AG04450 (cell line): ENCODE measurements at regions of chr12 and their contacts with region 1.

Region 1: GRCh38 chr12:68807576-68808387 is at the start of gene MDM2:
- DNase-seq: peak; percentile 61
- H3K4me3 ChIP-seq: peak within 1 kb of the TSS; percentile 97
- H3K27ac ChIP-seq: peak within 1 kb of the TSS; percentile 99
- H3K27me3 ChIP-seq: no peaks in the 10 kb centered on the region
- CTCF ChIP-seq: peak; percentile 76
- polyA plus RNA-seq, gene MDM2: 75.0 and 82.2 TPM in 2 replicates

Region 2: DNA sequence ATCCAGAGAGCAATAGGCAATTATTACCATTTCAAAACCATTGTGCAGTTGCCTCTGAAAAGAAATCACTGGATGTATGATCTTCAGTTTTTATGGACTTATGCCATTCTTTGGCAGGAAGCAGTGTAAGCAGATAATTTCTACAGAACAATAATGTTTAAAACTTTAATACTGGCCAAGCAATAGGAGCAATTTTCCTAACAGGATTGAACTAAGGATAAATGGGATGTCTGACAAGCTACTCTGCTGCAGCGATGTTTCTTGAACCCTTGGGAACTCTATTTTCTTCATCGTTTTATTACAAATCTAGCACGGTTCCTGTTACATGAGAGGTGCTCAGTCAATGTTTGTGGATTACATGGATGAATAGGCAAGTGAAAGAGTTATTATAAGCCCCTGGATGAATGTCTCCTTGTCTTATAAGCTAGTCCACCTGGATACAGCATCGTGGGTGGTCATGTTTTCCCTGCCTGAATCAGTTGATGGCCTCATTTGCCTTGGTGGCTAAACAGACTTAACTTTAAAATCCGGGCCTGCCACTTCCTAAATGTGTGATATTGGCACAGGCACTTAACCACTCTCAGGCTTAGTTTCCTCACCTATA is 407.5 kb before region 1 on chr12:
- CTCF ChIA-PET with region 1: no interaction called
- POLR2A ChIA-PET with region 1: no interaction called
- DNase-seq: no peak
- H3K4me3 ChIP-seq: no peak overlapping the region
- H3K27ac ChIP-seq: no peak overlapping the region
- H3K27me3 ChIP-seq: no peaks in the 10 kb centered on the region
- CTCF ChIP-seq: no peak

Region 3: DNA sequence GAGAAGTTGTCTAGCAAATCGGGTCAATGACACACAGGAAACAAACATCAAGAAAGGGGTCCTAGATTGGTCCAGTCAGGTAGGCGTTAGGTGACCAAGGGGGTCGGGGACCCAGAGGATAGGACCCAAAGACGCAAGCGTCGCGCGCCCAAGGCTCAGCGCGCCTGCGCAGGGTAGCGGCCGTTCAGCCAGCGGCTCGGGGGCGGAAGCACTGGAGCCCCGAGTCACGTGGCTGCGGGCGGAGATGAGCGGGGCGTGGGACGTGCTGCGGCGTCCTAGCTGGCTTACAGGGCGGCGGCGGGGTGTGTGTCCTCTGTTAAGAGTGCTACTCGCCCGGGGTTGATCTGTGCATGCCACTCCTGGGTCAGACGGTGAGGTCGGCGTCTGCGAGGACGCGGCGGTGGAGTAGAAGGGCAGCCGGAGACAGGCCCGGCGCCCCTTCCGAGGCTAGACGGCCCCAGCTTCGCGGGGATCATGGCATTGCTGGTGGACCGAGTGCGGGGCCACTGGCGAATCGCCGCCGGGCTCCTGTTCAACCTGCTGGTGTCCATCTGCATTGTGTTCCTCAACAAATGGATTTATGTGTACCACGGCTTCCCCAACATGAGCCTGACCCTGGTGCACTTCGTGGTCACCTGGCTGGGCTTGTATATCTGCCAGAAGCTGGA is 61.7 kb before region 1 on chr12 and contains the start of gene SLC35E3:
- CTCF ChIA-PET with region 1: interaction called, 6 read pairs
- POLR2A ChIA-PET with region 1: interaction called, 31 read pairs
- DNase-seq: peak; percentile 37
- H3K4me3 ChIP-seq: peak within 1 kb of the TSS; percentile 81
- H3K27ac ChIP-seq: no peak within 1 kb of the TSS
- H3K27me3 ChIP-seq: no peaks in the 10 kb centered on the region
- CTCF ChIP-seq: no peak
- polyA plus RNA-seq, gene SLC35E3: 7.7 and 9.2 TPM in 2 replicates

Region 4: GRCh38 chr12:68821357-68822188 is 13.8 kb after region 1 on chr12:
- CTCF ChIA-PET with region 1: interaction called, 5 read pairs
- POLR2A ChIA-PET with region 1: interaction called, 10 read pairs
- DNase-seq: no peak
- H3K4me3 ChIP-seq: no peak overlapping the region
- H3K27ac ChIP-seq: no peak overlapping the region
- H3K27me3 ChIP-seq: no peaks in the 10 kb centered on the region
- CTCF ChIP-seq: no peak

Region 5: GRCh38 chr12:68831272-68831671 is 23.5 kb after region 1 on chr12:
- CTCF ChIA-PET with region 1: interaction called, 110 read pairs
- POLR2A ChIA-PET with region 1: interaction called, 3 read pairs
- DNase-seq: no peak
- H3K4me3 ChIP-seq: no peak overlapping the region
- H3K27ac ChIP-seq: peak overlapping the region; percentile 11
- H3K27me3 ChIP-seq: no peaks in the 10 kb centered on the region
- CTCF ChIP-seq: no peak

Region 6: DNA sequence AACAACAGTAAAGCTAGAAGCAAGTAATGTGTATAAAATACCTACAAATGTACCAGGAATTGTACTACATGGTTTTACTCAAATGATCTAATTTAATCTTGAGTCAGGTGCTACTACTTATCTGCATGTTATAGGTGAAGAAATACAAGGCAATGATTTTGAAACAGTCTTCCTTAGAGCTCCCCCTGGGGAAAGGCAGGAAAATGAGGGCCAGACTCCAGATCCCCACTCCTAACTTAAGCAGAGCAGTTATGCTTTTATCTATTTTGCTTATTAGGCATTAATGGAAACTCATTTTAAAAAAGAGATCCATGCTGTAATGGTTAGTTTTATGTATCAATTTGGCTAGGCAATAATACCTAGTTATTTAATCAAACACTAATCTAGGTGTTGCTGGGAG is 322.3 kb after region 1 on chr12:
- CTCF ChIA-PET with region 1: no interaction called
- POLR2A ChIA-PET with region 1: no interaction called
- DNase-seq: no peak
- H3K4me3 ChIP-seq: no peak overlapping the region
- H3K27ac ChIP-seq: no peak overlapping the region
- H3K27me3 ChIP-seq: peaks cover 6% of the 10 kb centered on the region
- CTCF ChIP-seq: no peak